AG04449 (cell line): ENCODE measurements at regions of chr11 and their contacts with region 1.

Region 1: DNA sequence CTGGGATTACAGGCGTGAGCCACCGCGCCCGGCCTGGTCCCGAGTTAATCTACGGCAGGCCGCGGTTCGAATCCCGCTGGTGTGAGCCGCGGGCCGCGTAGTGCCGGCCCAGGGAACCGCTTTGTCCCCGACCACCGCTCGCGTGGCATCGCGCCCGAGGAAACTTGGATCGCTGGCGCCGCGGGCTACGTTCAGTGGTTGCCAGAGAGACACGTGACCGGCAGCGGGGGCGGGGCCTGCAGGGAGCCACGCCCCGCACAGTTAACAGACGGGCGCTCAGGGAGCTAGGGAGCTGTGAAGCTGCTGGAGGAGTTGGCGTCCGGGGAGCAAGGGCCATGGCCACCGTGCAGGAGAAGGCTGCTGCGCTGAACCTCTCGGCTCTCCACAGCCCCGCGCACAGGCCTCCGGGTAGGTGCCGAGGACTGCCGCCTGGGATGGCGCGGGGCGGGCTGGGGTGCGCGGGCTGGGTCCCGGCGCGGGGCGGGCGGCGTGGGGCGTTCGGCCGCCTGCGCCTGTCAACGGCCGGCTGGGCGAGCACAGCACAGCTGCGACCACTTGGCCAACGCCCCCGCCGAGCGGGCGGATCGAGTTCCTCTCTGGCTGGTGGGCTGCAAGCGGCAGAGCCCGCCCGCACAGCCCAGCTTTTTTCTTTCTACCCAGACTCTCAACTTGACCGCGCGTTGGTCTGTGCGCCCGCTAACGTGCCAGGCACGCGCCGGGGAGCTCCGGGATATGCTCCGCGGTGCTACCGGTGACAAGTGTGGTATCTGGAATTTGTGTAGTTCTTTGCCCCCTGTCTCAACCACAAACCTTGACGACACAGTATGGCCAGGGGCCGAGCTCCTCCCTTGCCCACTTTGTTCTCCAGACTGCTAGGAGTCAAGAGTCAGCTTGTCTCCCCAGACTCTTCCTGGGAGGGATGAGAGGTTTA is at the start of gene DEPDC7:
- DNase-seq: no peak
- H3K4me3 ChIP-seq: peak within 1 kb of the TSS; percentile 74
- CTCF ChIP-seq: no peak

Region 2: DNA sequence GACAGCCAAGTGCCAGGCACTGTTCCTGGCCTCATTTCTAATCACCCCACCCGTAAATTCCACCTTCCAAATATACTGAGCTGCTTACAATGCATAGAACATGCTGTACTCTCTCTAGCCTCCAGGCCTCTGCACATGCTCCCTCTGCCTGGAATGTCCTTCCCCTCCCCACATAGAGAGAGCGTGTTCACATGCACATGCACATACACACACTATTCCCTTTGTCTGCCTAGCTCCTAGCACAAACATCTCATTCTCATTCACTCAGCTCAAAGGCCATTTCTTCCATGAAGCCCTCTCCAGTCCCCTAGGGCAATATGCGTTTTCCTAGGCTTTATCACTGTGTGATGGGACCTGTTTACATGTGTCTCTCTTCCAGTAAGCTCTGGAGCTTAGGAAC is 725.1 kb before region 1 on chr11:
- CTCF ChIA-PET with region 1: no interaction called
- POLR2A ChIA-PET with region 1: no interaction called
- DNase-seq: no peak
- H3K4me3 ChIP-seq: no peak overlapping the region
- CTCF ChIP-seq: no peak

Region 3: GRCh38 chr11:33039274-33040032 is 23.6 kb after region 1 on chr11 and contains the start of gene TCP11L1:
- CTCF ChIA-PET with region 1: no interaction called
- POLR2A ChIA-PET with region 1: interaction called, 13 read pairs
- DNase-seq: peak; percentile 52
- H3K4me3 ChIP-seq: peak within 1 kb of the TSS; percentile 78
- CTCF ChIP-seq: no peak

Region 4: GRCh38 chr11:33347490-33348125 is 331.7 kb after region 1 on chr11:
- CTCF ChIA-PET with region 1: no interaction called
- POLR2A ChIA-PET with region 1: no interaction called
- DNase-seq: no peak
- H3K4me3 ChIP-seq: no peak overlapping the region
- CTCF ChIP-seq: no peak